ENCODE measurements at regions of chr11 and their contacts with region 1.

Region 1: GRCh38 chr11:118401151-118401878 is at the start of gene ATP5MG:
- DNase-seq: peak; percentile 77
- ATAC-seq: peak; percentile 84
- H3K4me3 Mint-ChIP-seq: peak within 1 kb of the TSS; percentile 97
- H3K27ac Mint-ChIP-seq: peak within 1 kb of the TSS; percentile 100
- H3K4me1 Mint-ChIP-seq: peaks cover 56% of the 10 kb centered on the region
- H3K27me3 Mint-ChIP-seq: no peaks in the 10 kb centered on the region
- CTCF ChIP-seq: no peak
- total RNA-seq, gene ATP5MG: 199 and 230 TPM in 2 replicates

Region 2: GRCh38 chr11:118180300-118180703 is 221.0 kb before region 1 on chr11:
- CTCF ChIA-PET with region 1: no interaction called
- POLR2A ChIA-PET with region 1: no interaction called
- intact Hi-C with region 1: no loop called
- DNase-seq: no peak
- ATAC-seq: no peak
- H3K4me3 Mint-ChIP-seq: no peak overlapping the region
- H3K27ac Mint-ChIP-seq: no peak overlapping the region
- H3K4me1 Mint-ChIP-seq: no peaks in the 10 kb centered on the region
- H3K27me3 Mint-ChIP-seq: peaks cover 17% of the 10 kb centered on the region
- CTCF ChIP-seq: no peak

Region 3: DNA sequence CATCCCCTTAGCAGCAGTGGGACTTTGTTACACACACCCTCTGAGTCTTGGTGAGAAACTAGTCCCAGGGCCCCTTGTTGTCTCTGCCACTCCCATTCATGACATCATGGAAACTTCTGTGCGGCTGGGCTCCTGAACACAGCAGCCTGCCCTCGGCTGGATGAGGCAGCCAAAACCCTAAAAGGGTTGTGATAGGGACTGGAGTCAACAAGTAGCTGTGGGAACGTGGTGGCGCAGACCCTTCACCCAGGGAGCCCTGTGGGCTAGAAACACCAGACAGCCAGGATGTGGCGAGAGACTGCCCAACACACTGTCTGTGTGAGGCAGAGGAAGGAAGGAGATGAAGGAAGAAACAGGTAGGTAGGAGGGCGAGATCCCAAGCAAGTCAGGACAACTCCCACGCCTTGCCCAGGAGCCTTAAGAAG is 62.7 kb before region 1 on chr11:
- CTCF ChIA-PET with region 1: no interaction called
- POLR2A ChIA-PET with region 1: no interaction called
- intact Hi-C with region 1: no loop called
- DNase-seq: no peak
- ATAC-seq: peak; percentile 61
- H3K4me3 Mint-ChIP-seq: no peak overlapping the region
- H3K27ac Mint-ChIP-seq: no peak overlapping the region
- H3K4me1 Mint-ChIP-seq: peaks cover 12% of the 10 kb centered on the region
- H3K27me3 Mint-ChIP-seq: no peaks in the 10 kb centered on the region
- CTCF ChIP-seq: no peak

Region 4: DNA sequence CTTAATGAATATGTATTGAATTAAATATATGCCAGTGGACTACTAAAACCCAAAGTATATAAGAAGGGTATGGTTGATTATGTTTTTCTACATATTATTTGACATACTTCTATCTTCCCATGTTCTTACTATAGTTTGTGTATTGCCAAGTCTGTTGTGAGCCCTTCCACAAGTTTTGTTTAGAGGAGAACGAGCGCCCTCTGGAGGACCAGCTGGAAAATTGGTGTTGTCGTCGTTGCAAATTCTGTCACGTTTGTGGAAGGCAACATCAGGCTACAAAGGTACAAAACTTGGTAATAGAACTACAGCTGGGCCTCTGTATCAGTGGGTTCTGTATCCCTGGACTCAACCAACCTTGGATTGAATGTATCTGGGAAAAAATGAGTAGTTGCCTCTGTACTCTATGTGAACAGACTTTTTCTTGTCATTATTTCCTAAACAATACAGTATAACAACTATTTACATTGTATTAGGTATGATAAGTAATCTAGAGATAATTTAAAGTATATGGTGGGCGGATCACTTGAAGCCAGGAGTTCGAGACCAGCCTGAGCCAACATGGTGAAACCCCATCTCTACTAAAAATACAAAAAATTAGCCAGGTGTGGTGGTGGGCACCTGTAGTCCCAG is 87.3 kb after region 1 on chr11:
- CTCF ChIA-PET with region 1: interaction called, 12 read pairs
- POLR2A ChIA-PET with region 1: interaction called, 4 read pairs
- intact Hi-C with region 1: loop called (anchors 1 kb)
- DNase-seq: peak; percentile 46
- ATAC-seq: peak; percentile 72
- H3K4me3 Mint-ChIP-seq: no peak overlapping the region
- H3K27ac Mint-ChIP-seq: no peak overlapping the region
- H3K4me1 Mint-ChIP-seq: no peaks in the 10 kb centered on the region
- H3K27me3 Mint-ChIP-seq: no peaks in the 10 kb centered on the region
- CTCF ChIP-seq: peak; percentile 41

Region 5: DNA sequence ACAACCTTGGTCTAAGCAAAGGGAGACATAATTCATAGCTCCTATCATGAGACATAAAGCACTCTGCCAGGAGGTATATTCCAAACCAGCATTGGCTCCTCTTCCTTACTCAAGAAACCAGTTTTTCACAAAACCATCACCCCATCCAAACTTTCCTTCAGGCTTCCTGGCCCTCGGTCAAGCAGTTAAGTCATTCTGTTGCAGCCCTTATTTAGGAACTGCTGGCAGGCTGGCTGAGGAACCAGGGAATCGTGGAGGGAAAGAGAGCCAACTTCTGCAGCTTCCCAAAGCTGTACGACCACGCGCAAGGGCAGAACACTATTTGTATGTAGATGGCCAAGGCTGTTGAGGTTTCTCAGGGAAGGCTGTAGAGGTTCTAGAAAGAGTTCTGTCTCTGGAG is 163.7 kb after region 1 on chr11:
- CTCF ChIA-PET with region 1: no interaction called
- POLR2A ChIA-PET with region 1: no interaction called
- intact Hi-C with region 1: loop called (anchors 1 kb)
- DNase-seq: no peak
- ATAC-seq: no peak
- H3K4me3 Mint-ChIP-seq: peak overlapping the region; percentile 68
- H3K27ac Mint-ChIP-seq: peak overlapping the region; percentile 20
- H3K4me1 Mint-ChIP-seq: peaks cover 10% of the 10 kb centered on the region
- H3K27me3 Mint-ChIP-seq: no peaks in the 10 kb centered on the region
- CTCF ChIP-seq: no peak

Region 6: DNA sequence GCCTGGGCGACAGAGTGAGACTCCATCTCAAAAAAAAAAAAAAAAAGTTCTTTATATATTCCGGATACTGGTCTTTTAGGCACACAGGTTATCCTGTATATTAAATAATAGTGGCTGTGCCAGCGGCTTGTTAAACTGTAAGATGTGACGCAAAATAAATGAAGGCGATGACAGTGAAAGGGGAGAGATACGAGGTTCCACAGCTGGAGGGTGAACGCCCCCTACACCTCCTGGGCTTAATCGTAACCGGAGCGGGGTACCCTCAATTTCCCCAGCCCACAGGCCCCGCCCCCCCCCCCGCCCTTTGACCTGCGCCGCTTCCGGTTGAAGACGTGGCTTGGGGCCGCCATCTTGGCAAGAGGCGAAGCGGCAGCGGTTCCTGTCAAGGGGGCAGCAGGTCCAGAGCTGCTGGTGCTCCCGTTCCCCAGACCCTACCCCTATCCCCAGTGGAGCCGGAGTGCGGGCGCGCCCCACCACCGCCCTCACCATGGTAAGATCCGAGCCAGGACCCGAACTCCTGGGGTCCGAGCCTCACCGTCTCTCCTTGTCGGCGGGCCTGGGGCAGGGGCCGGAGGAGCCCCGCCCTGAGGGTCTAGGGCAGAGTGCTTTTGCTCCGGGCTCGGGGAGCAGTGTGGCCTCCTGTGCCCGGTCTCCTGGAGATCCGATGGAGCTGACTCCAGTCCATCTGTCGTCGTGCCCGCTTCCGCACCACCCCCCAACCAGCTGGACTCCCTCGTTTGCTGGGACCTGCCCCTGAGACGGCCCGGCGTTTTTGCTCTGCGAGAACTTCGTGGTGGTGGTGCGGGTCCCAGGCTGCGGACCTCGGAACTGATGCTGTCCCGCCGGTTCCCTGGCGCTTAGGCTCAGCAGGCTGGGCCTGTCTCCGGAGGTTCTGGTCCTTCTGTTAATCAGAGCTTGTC is 171.0 kb after region 1 on chr11 and contains the start of gene ARCN1:
- CTCF ChIA-PET with region 1: no interaction called
- POLR2A ChIA-PET with region 1: no interaction called
- intact Hi-C with region 1: loop called (anchors 2 kb)
- DNase-seq: peak; percentile 67
- ATAC-seq: peak; percentile 88
- H3K4me3 Mint-ChIP-seq: peak within 1 kb of the TSS; percentile 93
- H3K27ac Mint-ChIP-seq: peak within 1 kb of the TSS; percentile 86
- H3K4me1 Mint-ChIP-seq: peaks cover 45% of the 10 kb centered on the region
- H3K27me3 Mint-ChIP-seq: no peaks in the 10 kb centered on the region
- CTCF ChIP-seq: no peak
- total RNA-seq, gene ARCN1: 91.3 and 94.7 TPM in 2 replicates

Measured in activated B cell treated with CpG ODN at 0.5 μM for 24 hours (primary cell).